A549 (cell line): ENCODE measurements at regions of chr17 and their contacts with region 1.

Region 1: GRCh38 chr17:8268550-8269298 is 19.6 kb downstream of the PFAS start:
- DNase-seq: no peak
- ATAC-seq: no peak
- H3K4me3 ChIP-seq: no peak overlapping the region
- H3K27ac ChIP-seq: no peak overlapping the region
- H3K4me1 ChIP-seq: no peaks in the 10 kb centered on the region
- CTCF ChIP-seq: no peak
- EP300 ChIP-seq: no peak
- POLR2A ChIP-seq: no peak
- RAD21 ChIP-seq: no peak

Region 2: DNA sequence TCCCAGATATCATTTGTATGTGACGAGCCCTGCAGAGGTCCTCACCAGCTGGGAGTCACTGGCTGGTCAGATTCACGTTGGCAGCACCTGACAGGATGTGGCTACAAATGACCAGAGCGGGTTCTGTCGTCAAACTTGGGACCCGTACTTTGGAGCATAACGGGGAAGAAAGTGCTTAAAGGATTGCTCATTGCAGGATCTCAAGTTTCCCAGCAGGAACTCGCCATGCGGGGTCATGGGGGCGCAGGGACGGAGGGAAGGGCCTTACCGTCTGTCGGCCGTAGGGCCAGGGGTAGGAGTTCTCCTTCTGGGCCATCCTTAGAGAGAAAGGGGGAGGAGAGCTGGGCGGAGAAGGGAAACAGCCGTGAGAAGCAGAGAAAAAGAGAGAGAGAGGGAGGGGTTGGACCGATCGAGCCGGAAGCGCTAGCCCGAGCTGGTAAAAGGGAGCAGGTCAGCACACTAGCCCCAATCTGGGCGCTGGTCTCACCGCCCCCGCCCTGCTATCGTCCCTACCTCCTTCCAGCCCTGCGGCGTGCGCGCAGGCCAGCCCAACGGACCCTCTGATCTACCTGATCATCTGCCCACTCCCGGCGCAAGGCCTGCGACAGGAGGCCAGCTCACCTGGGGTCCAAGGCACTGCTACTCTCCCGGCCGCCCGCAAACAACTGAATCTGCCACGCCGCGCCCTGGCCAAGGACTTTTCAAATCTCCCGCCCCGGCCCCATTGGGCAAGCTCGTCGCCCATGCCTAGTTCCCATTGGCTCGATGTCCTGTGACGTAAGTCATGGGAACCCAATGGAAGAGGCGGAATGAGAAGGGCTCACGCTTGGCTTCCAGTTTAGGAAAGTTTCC is 58.6 kb before region 1 on chr17 and contains the start of gene AURKB:
- CTCF ChIA-PET with region 1: no interaction called
- POLR2A ChIA-PET with region 1: no interaction called
- DNase-seq: peak; percentile 98
- ATAC-seq: peak; percentile 94 to 99
- H3K4me3 ChIP-seq: peak within 1 kb of the TSS; percentile 64
- H3K27ac ChIP-seq: peak within 1 kb of the TSS; percentile 78 to 89
- H3K4me1 ChIP-seq: peaks cover 19% of the 10 kb centered on the region
- CTCF ChIP-seq: no peak
- EP300 ChIP-seq: no peak
- POLR2A ChIP-seq: peak; percentile 50; the same call in 1 of the 2 replicates
- RAD21 ChIP-seq: no peak
- polyA plus RNA-seq, gene AURKB: 51.0 and 59.5 TPM in 2 replicates

Region 3: DNA sequence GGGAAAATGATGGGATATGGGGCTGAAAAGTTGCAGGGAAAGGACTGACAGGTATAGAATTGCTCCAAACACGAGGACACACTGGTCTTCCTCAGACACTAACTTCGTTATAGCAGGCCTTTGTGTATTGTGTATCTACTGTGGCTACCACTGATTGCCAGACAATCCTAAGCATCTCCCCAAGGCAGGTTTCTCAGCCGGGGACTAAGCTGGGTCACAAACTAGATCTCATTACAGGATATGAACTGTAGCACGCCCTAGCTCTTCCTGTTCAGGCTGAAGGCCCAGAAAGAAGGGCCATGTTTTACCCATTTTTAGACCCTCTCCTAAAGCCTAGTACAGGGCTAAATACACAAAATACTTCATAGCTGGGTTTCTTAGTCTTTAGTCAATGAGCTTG is 14.6 kb after region 1 on chr17:
- CTCF ChIA-PET with region 1: interaction called, 17 read pairs
- POLR2A ChIA-PET with region 1: interaction called, 5 read pairs
- DNase-seq: no peak
- ATAC-seq: no peak
- H3K4me3 ChIP-seq: no peak overlapping the region
- H3K27ac ChIP-seq: no peak overlapping the region
- H3K4me1 ChIP-seq: peaks cover 5% of the 10 kb centered on the region
- CTCF ChIP-seq: no peak
- EP300 ChIP-seq: no peak
- POLR2A ChIP-seq: no peak
- RAD21 ChIP-seq: no peak

Region 4: DNA sequence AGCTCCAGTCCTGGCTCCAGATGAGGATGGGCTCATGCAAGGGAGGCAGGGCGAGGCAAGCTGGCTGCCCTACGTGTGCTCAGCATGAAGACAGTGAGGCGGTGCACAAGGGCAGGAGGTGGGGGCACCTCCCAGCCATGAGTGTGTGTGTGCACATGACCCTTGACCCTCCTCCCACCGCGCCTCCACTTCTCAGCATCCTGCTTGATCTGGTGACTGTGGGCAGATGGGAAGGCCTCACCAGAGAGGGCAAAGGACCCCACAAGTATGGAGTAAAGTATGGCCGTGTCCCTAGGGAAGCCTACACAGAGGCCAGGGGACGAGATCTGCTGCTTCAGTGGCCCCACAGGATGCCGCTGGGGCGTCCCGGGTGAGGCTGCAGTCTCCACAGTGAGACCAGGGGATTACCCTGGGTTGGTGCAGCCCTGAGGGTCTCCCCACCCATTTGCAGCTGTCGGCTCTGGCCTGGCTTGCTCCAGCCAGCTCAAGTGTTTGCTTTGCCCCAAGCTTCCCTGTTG is 136.8 kb after region 1 on chr17:
- CTCF ChIA-PET with region 1: no interaction called
- POLR2A ChIA-PET with region 1: no interaction called
- DNase-seq: no peak
- ATAC-seq: 0 out of 6 replicates have a peak, but pooled peaks of 1 of the 2 experiments have one; percentile 14
- H3K4me3 ChIP-seq: no peak overlapping the region
- H3K27ac ChIP-seq: no peak overlapping the region
- H3K4me1 ChIP-seq: peaks cover 6% of the 10 kb centered on the region; the same call in 2 of the 3 replicates
- CTCF ChIP-seq: no peak
- EP300 ChIP-seq: no peak
- POLR2A ChIP-seq: no peak
- RAD21 ChIP-seq: no peak